MCF 10A (cell line): ENCODE measurements at regions of chrX and their contacts with region 1.

Region 1: DNA sequence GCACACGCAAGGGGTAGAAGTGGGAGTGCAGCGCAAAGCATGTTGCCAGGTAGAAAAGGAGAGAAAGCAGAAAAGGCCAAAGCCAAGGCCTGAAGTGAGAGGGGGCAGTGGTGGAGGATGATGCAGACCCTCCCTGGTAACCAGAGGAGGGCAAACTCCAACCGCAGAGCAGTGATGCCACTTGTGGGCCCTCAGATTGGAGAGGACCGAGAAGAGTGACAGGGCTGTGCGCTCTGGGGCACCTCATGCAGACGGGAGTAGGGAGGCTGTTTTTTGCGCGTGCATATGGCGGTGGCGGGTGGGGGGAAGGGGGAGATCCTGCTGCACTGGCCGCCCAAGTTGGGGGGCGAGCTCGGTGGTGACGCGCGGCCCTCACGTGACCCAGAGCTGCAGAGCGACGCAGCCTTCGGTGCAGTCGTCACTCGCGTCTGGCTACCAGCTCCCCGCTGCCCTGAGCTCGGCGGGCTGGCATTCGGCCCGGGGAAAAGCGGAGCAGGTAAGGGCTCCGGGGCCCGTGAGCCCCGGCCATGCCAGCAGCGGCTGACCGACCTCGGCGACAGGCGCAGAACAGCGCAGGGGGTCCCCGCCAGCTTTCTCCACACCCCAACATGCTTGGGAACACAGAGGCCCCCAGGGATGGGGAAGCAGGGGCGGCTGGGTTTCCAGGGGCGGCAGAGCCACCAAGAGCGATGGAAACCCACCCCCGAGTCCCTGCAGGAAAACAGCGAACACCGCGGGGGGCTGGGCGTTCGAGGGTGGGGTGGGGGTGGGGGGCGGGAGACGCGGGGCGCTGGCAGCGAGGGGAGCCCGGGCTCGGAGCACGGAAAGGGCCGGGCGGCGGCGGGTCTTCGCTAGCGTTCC is at the start of gene BEX3:
- DNase-seq: peak; percentile 29
- H3K4me3 Mint-ChIP-seq: peak within 1 kb of the TSS; percentile 74
- H3K27ac Mint-ChIP-seq: peak within 1 kb of the TSS; percentile 67
- H3K4me1 Mint-ChIP-seq: peaks cover 5% of the 10 kb centered on the region
- H3K27me3 Mint-ChIP-seq: peaks cover 24% of the 10 kb centered on the region
- CTCF ChIP-seq: no peak
- total RNA-seq, gene BEX3: 166 and 173 TPM in 2 replicates

Region 2: GRCh38 chrX:103233263-103233662 is 143.1 kb before region 1 on chrX:
- CTCF ChIA-PET with region 1: no interaction called
- POLR2A ChIA-PET with region 1: no interaction called
- intact Hi-C with region 1: no loop called
- DNase-seq: no peak
- H3K4me3 Mint-ChIP-seq: no peak overlapping the region
- H3K27ac Mint-ChIP-seq: no peak overlapping the region
- H3K4me1 Mint-ChIP-seq: no peaks in the 10 kb centered on the region
- H3K27me3 Mint-ChIP-seq: peaks cover 60% of the 10 kb centered on the region
- CTCF ChIP-seq: no peak

Region 3: DNA sequence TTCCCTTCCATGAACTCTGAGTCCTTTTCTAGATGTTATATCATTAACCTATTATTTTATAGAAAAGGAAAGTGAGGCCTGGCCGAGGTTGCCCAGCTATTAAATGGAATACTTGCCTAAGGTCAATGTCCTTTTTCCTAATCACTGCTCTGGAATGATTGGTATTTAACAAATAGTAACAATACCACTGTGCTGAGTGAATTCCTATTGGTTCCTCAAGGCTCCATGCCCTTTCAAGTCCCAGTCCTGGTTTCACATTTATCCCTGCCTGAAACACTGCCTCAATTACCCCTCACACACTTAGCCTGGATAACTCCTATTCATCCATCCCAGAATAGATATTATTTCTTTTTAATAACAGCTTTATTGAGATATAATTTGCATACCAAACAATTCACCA is 13.8 kb before region 1 on chrX:
- CTCF ChIA-PET with region 1: interaction called, 5 read pairs
- POLR2A ChIA-PET with region 1: interaction called, 51 read pairs
- intact Hi-C with region 1: no loop called
- DNase-seq: no peak
- H3K4me3 Mint-ChIP-seq: no peak overlapping the region
- H3K27ac Mint-ChIP-seq: peak overlapping the region; percentile 9
- H3K4me1 Mint-ChIP-seq: peaks cover 17% of the 10 kb centered on the region
- H3K27me3 Mint-ChIP-seq: peaks cover 58% of the 10 kb centered on the region
- CTCF ChIP-seq: no peak

Region 4: GRCh38 chrX:103517246-103517645 is 140.9 kb after region 1 on chrX:
- CTCF ChIA-PET with region 1: no interaction called
- POLR2A ChIA-PET with region 1: no interaction called
- intact Hi-C with region 1: no loop called
- DNase-seq: peak; percentile 53
- H3K4me3 Mint-ChIP-seq: peak overlapping the region; percentile 11
- H3K27ac Mint-ChIP-seq: peak overlapping the region; percentile 73
- H3K4me1 Mint-ChIP-seq: peaks cover 11% of the 10 kb centered on the region
- H3K27me3 Mint-ChIP-seq: peaks cover 29% of the 10 kb centered on the region
- CTCF ChIP-seq: no peak